Activated T-helper 2 cell treated with anti-CD3 and anti-CD28 coated beads, Interferon-gamma antibody, Interleukin-2, Interleukin-4, amounts not matched to agents 10 μg/mL and 5 μg/mL and 100 μg/mL, durations not matched to agents 14 hours and 24 hours and 36 hours (primary cell): ENCODE measurements at regions of chr11 and their contacts with region 1.

Region 1: GRCh38 chr11:61429691-61430582 is at the starts of genes CPSF7 and SDHAF2:
- DNase-seq: peak; percentile 97
- H3K4me3 Mint-ChIP-seq: peak within 1 kb of the TSS; percentile 95
- H3K27ac Mint-ChIP-seq: peak within 1 kb of the TSS; percentile 97
- H3K4me1 Mint-ChIP-seq: peaks cover 43% of the 10 kb centered on the region
- H3K27me3 Mint-ChIP-seq: no peaks in the 10 kb centered on the region
- total RNA-seq, gene CPSF7: 123 and 135 TPM in 2 replicates
- total RNA-seq, gene SDHAF2: 41.6 and 46.4 TPM in 2 replicates

Region 2: DNA sequence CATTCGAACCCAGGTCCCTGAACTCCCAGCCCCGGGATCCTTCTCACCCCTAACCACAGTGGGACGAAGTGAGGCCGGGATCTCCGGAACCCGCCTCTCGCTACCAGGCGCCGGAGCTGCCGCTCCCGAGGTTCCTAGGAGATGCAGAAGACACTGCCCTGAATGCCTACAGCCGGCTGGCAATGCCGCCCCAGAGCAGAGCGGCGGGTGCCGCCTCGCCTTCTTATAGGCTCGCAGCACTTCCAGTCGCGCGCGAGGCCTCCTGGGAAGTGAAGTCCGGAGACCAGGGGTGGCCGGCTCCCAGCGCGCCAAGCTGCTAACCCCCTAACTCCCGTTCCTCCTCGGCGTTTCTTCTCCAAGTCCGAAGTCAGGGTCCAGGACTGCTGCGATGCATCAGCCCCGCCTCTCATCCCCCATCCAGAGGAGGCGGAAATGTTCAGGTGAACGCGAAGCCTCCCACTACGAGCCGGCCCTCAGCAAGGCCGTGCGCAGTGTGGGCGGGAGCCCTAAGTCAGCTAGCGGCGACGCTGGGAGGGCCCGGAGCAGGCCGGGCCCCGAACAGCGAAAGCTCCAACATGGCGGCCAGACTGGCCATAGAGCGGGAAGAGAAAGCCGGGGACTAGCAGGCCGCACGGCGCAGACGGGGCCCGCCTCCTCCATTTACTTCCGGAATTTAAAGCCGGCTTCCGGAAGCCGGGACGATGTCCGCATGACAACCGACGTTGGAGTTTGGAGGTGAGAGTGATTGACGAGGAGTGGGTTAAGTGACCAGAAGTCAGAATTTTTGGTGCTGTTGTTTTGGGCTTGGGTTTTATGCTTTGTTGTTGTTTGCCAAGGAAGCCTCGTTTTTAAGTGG is 68.0 kb before region 1 on chr11 and contains the starts of genes CYB561A3 and TMEM138:
- intact Hi-C with region 1: loop called (anchors 1 kb)
- DNase-seq: peak; percentile 91
- H3K4me3 Mint-ChIP-seq: peak within 1 kb of the TSS; percentile 100
- H3K27ac Mint-ChIP-seq: peak within 1 kb of the TSS; percentile 99
- H3K4me1 Mint-ChIP-seq: peaks cover 22% of the 10 kb centered on the region
- H3K27me3 Mint-ChIP-seq: no peaks in the 10 kb centered on the region
- total RNA-seq, gene CYB561A3: 32.9 and 34.1 TPM in 2 replicates
- total RNA-seq, gene TMEM138: 52.3 and 54.5 TPM in 2 replicates

Region 3: GRCh38 chr11:61392981-61393595 is 36.8 kb before region 1 on chr11:
- intact Hi-C with region 1: loop called (anchors 2 kb)
- DNase-seq: no peak
- H3K4me3 Mint-ChIP-seq: peak overlapping the region; percentile 84
- H3K27ac Mint-ChIP-seq: peak overlapping the region; percentile 91
- H3K4me1 Mint-ChIP-seq: peaks cover 15% of the 10 kb centered on the region
- H3K27me3 Mint-ChIP-seq: no peaks in the 10 kb centered on the region